Activated CD8-positive, alpha-beta T cell treated with anti-CD3 and anti-CD28 coated beads, Interleukin-2, amount 10 ng/mL, durations not matched to agents 7 days and 5 days (primary cell): ENCODE measurements at regions of chr12 and their contacts with region 1.

Region 1: GRCh38 chr12:76031537-76032073 is at the start of gene PHLDA1:
- DNase-seq: peak; percentile 93
- ATAC-seq: peak; percentile 86
- H3K4me3 Mint-ChIP-seq: peak within 1 kb of the TSS; percentile 90
- H3K27ac Mint-ChIP-seq: peak within 1 kb of the TSS; percentile 93
- H3K4me1 Mint-ChIP-seq: peaks cover 49% of the 10 kb centered on the region
- H3K27me3 Mint-ChIP-seq: peaks cover 11% of the 10 kb centered on the region
- total RNA-seq, gene PHLDA1: 5.6 to 6.1 TPM

Region 2: GRCh38 chr12:75480469-75480949 is 551.1 kb before region 1 on chr12 and contains the start of gene GLIPR1:
- CTCF ChIA-PET with region 1: interaction called, 17 read pairs
- POLR2A ChIA-PET with region 1: interaction called, 6 read pairs
- DNase-seq: peak; percentile 83
- ATAC-seq: peak; percentile 83
- H3K4me3 Mint-ChIP-seq: peak within 1 kb of the TSS; percentile 91
- H3K27ac Mint-ChIP-seq: peak within 1 kb of the TSS; percentile 100
- H3K4me1 Mint-ChIP-seq: peaks cover 71% of the 10 kb centered on the region
- H3K27me3 Mint-ChIP-seq: no peaks in the 10 kb centered on the region
- total RNA-seq, gene GLIPR1: 30.5 to 33.0 TPM

Region 3: DNA sequence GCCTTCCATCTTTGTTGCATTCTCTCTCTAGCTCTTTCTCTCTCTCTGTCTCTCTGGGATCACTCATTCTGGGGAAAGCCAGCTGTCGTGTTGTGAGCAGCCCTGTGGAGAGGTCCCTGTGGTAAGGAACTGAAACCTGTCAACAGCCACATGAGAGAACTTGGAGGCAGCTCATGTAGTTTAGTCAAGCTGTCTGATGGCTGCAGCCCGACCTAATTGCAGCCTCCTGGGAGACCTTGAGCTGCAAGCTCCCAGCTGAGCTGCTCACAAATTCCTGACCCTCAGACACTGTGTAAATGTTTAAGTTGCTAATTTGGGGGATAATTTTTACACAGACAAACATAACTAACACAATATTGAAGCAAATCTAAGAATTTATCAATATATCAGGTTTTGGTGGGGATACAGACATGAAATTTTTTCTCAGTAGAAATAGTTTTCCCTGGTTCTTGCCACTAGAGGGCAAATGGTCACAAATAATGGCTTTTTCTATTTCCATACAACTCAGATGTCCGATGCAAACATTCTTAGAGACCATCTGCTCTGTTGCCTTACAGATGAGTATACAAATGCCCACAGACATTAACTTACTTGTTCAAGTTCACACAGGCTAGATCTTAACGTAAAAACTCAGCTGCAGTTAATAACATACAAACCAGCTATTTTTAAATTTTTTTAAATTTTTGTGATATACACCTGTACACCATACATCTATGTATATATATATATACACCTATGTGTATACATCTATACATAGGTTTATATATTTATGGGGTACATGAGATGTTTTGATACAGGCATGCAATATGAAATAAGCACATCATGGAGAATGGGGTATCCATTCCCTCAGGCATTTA is 504.7 kb before region 1 on chr12:
- CTCF ChIA-PET with region 1: interaction called, 38 read pairs
- POLR2A ChIA-PET with region 1: interaction called, 6 read pairs
- DNase-seq: peak; percentile 30
- ATAC-seq: peak; percentile 87
- H3K4me3 Mint-ChIP-seq: no peak overlapping the region
- H3K27ac Mint-ChIP-seq: no peak overlapping the region
- H3K4me1 Mint-ChIP-seq: peaks cover 7% of the 10 kb centered on the region
- H3K27me3 Mint-ChIP-seq: peaks cover 22% of the 10 kb centered on the region

Region 4: GRCh38 chr12:75814851-75815754 is 216.5 kb before region 1 on chr12:
- CTCF ChIA-PET with region 1: interaction called, 22 read pairs
- POLR2A ChIA-PET with region 1: interaction called, 12 read pairs
- DNase-seq: no peak
- ATAC-seq: peak; percentile 50
- H3K4me3 Mint-ChIP-seq: no peak overlapping the region
- H3K27ac Mint-ChIP-seq: no peak overlapping the region
- H3K4me1 Mint-ChIP-seq: peaks cover 10% of the 10 kb centered on the region
- H3K27me3 Mint-ChIP-seq: peaks cover 3% of the 10 kb centered on the region

Region 5: GRCh38 chr12:75944097-75944904 is 87.3 kb before region 1 on chr12:
- CTCF ChIA-PET with region 1: interaction called, 5 read pairs
- POLR2A ChIA-PET with region 1: interaction called, 10 read pairs
- DNase-seq: peak; percentile 31
- ATAC-seq: peak; percentile 91
- H3K4me3 Mint-ChIP-seq: peak overlapping the region; percentile 61
- H3K27ac Mint-ChIP-seq: peak overlapping the region; percentile 97
- H3K4me1 Mint-ChIP-seq: peaks cover 25% of the 10 kb centered on the region
- H3K27me3 Mint-ChIP-seq: no peaks in the 10 kb centered on the region

Region 6: DNA sequence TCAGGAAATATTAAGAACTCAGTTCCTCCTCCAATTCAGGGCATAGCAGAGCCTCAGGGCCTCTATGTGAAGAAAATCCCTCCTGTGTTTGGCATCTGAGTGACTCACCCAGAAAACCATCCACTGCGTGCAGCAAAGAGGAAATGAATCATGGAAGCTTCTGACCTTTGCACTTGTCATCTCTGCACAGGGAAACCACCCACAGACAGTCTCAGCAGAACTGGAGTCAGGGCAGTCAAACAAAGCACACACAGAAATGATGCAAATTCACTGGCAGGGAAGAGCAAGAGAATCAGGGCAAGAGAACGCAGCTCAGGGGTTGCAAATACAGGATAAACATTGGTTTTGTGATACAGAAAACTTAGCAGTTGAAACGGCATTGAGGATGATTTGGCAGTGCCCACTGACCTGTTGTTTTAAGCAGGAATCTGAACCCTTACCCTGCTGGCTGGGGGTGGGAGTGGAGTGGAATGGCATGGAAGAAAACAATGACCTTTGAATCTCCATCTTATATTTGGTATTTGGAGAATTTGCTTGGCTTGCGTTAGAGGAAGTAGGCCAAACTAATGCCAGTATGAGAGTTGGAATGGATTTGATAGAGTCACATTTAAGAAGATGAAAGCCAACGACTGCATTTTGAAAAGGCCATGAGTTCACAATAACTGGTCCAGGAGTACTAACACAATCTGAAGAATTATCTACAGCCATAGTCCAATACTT is 53.5 kb before region 1 on chr12:
- CTCF ChIA-PET with region 1: interaction called, 13 read pairs
- POLR2A ChIA-PET with region 1: interaction called, 69 read pairs
- DNase-seq: peak; percentile 89
- ATAC-seq: peak; percentile 90
- H3K4me3 Mint-ChIP-seq: peak overlapping the region; percentile 29
- H3K27ac Mint-ChIP-seq: peak overlapping the region; percentile 90
- H3K4me1 Mint-ChIP-seq: peaks cover 52% of the 10 kb centered on the region
- H3K27me3 Mint-ChIP-seq: no peaks in the 10 kb centered on the region

Region 7: GRCh38 chr12:76094754-76095153 is 63.1 kb after region 1 on chr12:
- CTCF ChIA-PET with region 1: no interaction called
- POLR2A ChIA-PET with region 1: no interaction called
- DNase-seq: no peak
- ATAC-seq: no peak
- H3K4me3 Mint-ChIP-seq: no peak overlapping the region
- H3K27ac Mint-ChIP-seq: no peak overlapping the region
- H3K4me1 Mint-ChIP-seq: no peaks in the 10 kb centered on the region
- H3K27me3 Mint-ChIP-seq: no peaks in the 10 kb centered on the region

Region 8: DNA sequence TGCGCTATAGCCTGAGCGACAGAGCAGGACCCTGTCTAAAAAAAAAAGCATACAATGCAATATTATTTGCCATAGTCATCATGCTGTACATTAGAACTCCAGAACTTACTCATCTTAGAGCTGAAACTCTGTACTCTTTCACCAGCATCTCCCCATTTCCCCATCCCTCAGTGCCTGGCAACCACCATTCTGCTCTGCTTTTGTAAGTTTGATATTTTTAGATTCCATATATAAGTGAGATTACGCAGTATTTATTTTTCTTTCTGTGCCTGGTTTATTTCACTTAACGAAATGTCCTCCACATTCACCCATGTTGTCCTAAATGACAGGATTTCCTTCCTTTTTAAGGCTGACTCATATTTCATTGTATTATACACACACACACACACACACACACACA is 194.8 kb after region 1 on chr12:
- CTCF ChIA-PET with region 1: no interaction called
- POLR2A ChIA-PET with region 1: no interaction called
- DNase-seq: no peak
- ATAC-seq: no peak
- H3K4me3 Mint-ChIP-seq: no peak overlapping the region
- H3K27ac Mint-ChIP-seq: no peak overlapping the region
- H3K4me1 Mint-ChIP-seq: no peaks in the 10 kb centered on the region
- H3K27me3 Mint-ChIP-seq: peaks cover 6% of the 10 kb centered on the region

Region 9: GRCh38 chr12:76410781-76411180 is 379.2 kb after region 1 on chr12:
- CTCF ChIA-PET with region 1: no interaction called
- POLR2A ChIA-PET with region 1: no interaction called
- DNase-seq: no peak
- ATAC-seq: no peak
- H3K4me3 Mint-ChIP-seq: no peak overlapping the region
- H3K27ac Mint-ChIP-seq: no peak overlapping the region
- H3K4me1 Mint-ChIP-seq: no peaks in the 10 kb centered on the region
- H3K27me3 Mint-ChIP-seq: no peaks in the 10 kb centered on the region